HCT116 (cell line): ENCODE measurements at regions of chr1 and their contacts with region 1.

Region 1: DNA sequence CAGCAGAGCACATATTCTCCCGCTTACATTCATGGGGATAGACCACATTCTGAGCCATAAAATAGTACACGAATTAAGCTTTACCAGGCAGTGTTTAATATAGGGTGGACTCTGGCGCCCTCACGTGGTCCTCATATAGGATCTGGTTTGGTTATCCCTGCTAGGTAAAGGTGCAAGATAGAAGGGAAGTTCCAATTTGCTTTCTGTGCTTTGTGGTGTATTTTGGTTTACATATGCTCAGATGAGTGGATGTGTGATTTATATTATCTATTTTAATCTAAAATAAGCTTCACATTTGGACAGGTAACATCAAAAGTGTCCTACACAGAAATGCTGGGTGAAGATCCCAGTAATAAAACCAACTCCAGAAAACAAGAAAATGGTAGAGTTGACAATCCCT is 3.6 kb downstream of the CR1 start:
- DNase-seq: peak; percentile 59
- ATAC-seq: peak; percentile 98
- H3K4me3 ChIP-seq: no peak overlapping the region
- H3K27ac ChIP-seq: no peak overlapping the region
- H3K4me1 ChIP-seq: no peaks in the 10 kb centered on the region
- H3K27me3 ChIP-seq: peaks cover 5% of the 10 kb centered on the region; the same call in 1 of the 2 replicates
- CTCF ChIP-seq: peak; percentile 62 to 89 (median 81)
- POLR2A ChIP-seq: no peak
- RAD21 ChIP-seq: peak; percentile 97

Region 2: GRCh38 chr1:207084701-207085180 is 414.8 kb before region 1 on chr1:
- CTCF ChIA-PET with region 1: interaction called, 33 read pairs
- POLR2A ChIA-PET with region 1: no interaction called
- RAD21 ChIA-PET with region 1: no interaction called
- intact Hi-C with region 1: loop called (anchors 1 kb)
- DNase-seq: peak; percentile 69
- ATAC-seq: peak; percentile 99
- H3K4me3 ChIP-seq: no peak overlapping the region
- H3K27ac ChIP-seq: no peak overlapping the region
- H3K4me1 ChIP-seq: peaks cover 0 to 4% of the 10 kb centered on the region in 2 experiments; a peak in 2 of 4 replicates
- H3K27me3 ChIP-seq: 0 out of 2 replicates have a peak, but pooled peaks cover 3% of the 10 kb centered on the region
- CTCF ChIP-seq: peak; percentile 61 to 84 (median 62)
- POLR2A ChIP-seq: no peak
- RAD21 ChIP-seq: peak; percentile 85

Region 3: GRCh38 chr1:207259391-207259790 is 240.2 kb before region 1 on chr1:
- CTCF ChIA-PET with region 1: interaction called, 3 read pairs
- POLR2A ChIA-PET with region 1: no interaction called
- RAD21 ChIA-PET with region 1: no interaction called
- intact Hi-C with region 1: loop called (anchors 5 kb)
- DNase-seq: peak; percentile 27
- ATAC-seq: peak; percentile 79
- H3K4me3 ChIP-seq: no peak overlapping the region
- H3K27ac ChIP-seq: no peak overlapping the region
- H3K4me1 ChIP-seq: no peaks in the 10 kb centered on the region
- H3K27me3 ChIP-seq: no peaks in the 10 kb centered on the region
- CTCF ChIP-seq: peak; percentile 56 to 66 (median 59); a peak in 5 of 6 replicates
- POLR2A ChIP-seq: no peak
- RAD21 ChIP-seq: peak; percentile 84

Region 4: GRCh38 chr1:207510444-207510843 is 10.9 kb after region 1 on chr1:
- CTCF ChIA-PET with region 1: no interaction called
- POLR2A ChIA-PET with region 1: no interaction called
- RAD21 ChIA-PET with region 1: no interaction called
- intact Hi-C with region 1: no loop called
- DNase-seq: no peak
- ATAC-seq: no peak
- H3K4me3 ChIP-seq: no peak overlapping the region
- H3K27ac ChIP-seq: no peak overlapping the region
- H3K4me1 ChIP-seq: no peaks in the 10 kb centered on the region
- H3K27me3 ChIP-seq: no peaks in the 10 kb centered on the region
- CTCF ChIP-seq: no peak
- POLR2A ChIP-seq: no peak
- RAD21 ChIP-seq: no peak